ENCODE measurements at regions of chr7 and their contacts with region 1.

Region 1: GRCh38 chr7:43906331-43907010 is at the start of gene URGCP:
- DNase-seq: peak; percentile 68
- ATAC-seq: peak; percentile 95
- H3K4me3 ChIP-seq: peak within 1 kb of the TSS; percentile 47 to 75 (median 57)
- H3K4me3 Mint-ChIP-seq: peak within 1 kb of the TSS; percentile 97
- H3K27ac ChIP-seq: peak within 1 kb of the TSS in 1 of 2 donors; percentile 54
- H3K27ac Mint-ChIP-seq: peak within 1 kb of the TSS; percentile 97
- H3K4me1 ChIP-seq: peaks cover 9 to 18% of the 10 kb centered on the region in 2 donors
- H3K4me1 Mint-ChIP-seq: peaks cover 30% of the 10 kb centered on the region
- H3K27me3 ChIP-seq: no peaks in the 10 kb centered on the region
- H3K27me3 Mint-ChIP-seq: no peaks in the 10 kb centered on the region
- CTCF ChIP-seq: no peak
- total RNA-seq, gene URGCP: 25.1 and 31.3 TPM in 2 replicates

Region 2: DNA sequence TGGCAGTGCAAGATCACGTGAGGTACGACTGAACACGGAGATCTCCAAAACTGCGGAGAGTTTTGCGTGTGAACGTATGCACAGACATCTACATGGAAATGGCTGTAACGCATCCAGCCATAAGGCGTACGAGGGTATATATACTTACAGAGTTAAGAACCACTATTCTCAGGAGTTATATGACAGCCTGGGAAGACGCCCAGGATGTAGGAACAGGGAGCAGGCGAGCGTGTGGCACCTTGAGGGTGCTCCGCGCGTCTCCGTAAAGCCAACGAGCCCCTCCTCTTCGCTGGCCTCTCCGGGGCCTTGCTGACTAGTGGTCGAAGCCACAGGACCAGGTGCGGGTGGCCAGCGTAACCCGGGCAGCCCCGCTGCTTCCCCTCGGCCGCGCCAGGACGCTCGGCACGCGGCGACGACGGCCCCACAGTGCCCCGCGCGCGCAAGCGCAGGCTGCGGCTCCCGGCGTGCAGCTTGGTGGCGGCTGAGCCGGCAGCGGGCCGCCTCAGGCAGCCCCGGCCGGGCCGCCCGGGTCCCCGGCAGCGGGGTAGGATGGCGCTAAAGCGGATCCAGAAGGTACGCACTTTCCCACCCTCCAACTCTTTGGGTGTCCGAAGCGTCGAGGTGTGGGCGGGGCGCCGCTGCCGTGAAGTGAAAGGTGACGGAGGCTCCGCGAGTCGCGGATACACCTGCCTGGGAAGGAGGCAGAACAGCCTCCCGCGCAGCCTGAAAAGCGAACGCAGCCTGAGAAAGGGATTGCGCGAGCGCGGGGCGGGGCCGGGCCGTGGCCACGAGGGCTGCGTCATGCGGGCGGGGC is 19.7 kb after region 1 on chr7 and contains the start of gene UBE2D4:
- CTCF ChIA-PET with region 1: no interaction called
- POLR2A ChIA-PET with region 1: interaction called, 6 read pairs
- intact Hi-C with region 1: loop called (anchors 1 kb)
- DNase-seq: peak; percentile 93
- ATAC-seq: peak; percentile 87
- H3K4me3 ChIP-seq: peak within 1 kb of the TSS; percentile 53 to 85 (median 72)
- H3K4me3 Mint-ChIP-seq: peak within 1 kb of the TSS; percentile 95
- H3K27ac ChIP-seq: peak within 1 kb of the TSS; percentile 87 to 94
- H3K27ac Mint-ChIP-seq: peak within 1 kb of the TSS; percentile 96
- H3K4me1 ChIP-seq: peaks cover 8 to 21% of the 10 kb centered on the region in 2 donors
- H3K4me1 Mint-ChIP-seq: peaks cover 18% of the 10 kb centered on the region
- H3K27me3 ChIP-seq: no peaks in the 10 kb centered on the region
- H3K27me3 Mint-ChIP-seq: no peaks in the 10 kb centered on the region
- CTCF ChIP-seq: no peak
- total RNA-seq, gene UBE2D4: 9.4 and 11.4 TPM in 2 replicates

Region 3: GRCh38 chr7:44536090-44536489 is 629.6 kb after region 1 on chr7:
- CTCF ChIA-PET with region 1: no interaction called
- POLR2A ChIA-PET with region 1: interaction called, 11 read pairs
- intact Hi-C with region 1: no loop called
- DNase-seq: no peak
- ATAC-seq: no peak
- H3K4me3 ChIP-seq: no peak overlapping the region
- H3K4me3 Mint-ChIP-seq: no peak overlapping the region
- H3K27ac ChIP-seq: no peak overlapping the region
- H3K27ac Mint-ChIP-seq: no peak overlapping the region
- H3K4me1 ChIP-seq: peaks cover under 1 to 1% of the 10 kb centered on the region in 2 donors
- H3K4me1 Mint-ChIP-seq: peaks cover 2% of the 10 kb centered on the region
- H3K27me3 ChIP-seq: no peaks in the 10 kb centered on the region
- H3K27me3 Mint-ChIP-seq: no peaks in the 10 kb centered on the region
- CTCF ChIP-seq: no peak

Measured in B cell (primary cell).